ENCODE measurements at regions of chr12 and their contacts with region 1.

Region 1: DNA sequence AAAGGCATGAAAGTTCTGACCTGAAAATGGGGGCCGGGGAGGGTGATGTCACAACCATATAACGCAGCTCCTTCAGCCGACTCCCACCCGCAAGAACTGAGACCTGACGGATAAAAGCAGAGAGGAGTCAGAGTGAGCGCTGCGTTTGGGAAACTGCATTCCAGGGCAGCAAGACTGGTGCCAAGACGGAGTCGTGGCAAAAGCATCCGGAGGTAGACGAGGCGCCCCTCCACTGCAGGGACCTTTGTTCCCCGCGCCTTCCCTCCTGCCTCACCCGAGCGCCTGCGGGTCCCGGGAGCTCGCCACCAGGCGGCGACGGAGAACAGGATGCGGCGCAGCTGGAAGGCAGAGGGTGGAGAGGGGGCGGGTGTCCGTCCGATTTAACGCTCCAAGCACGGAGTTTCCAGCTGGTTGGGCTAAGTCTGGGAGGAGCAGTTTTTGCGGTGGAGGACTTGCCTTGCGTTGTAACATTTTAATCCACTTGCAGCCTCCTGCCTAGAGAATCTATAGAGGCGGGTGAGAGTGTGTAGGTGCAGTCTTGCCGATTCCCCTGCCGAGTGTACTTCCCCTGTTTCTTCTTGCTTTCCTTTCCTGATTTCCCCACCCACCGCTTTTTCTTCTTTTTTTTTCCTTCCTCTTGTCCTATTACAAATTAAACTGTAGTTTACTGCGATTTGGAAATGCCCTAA is 1.2 kb upstream of the CPNE8 start:
- DNase-seq: peak; percentile 65 to 93
- H3K4me3 ChIP-seq: peak overlapping the region; percentile 63 to 75 (median 72)
- H3K27ac ChIP-seq: no peak overlapping the region
- H3K4me1 ChIP-seq: peaks cover 0 to 2% (median 0%) of the 10 kb centered on the region in 4 experiments; a peak in 1 of 7 replicates
- H3K27me3 ChIP-seq: peaks cover 0 to 10% (median 4%) of the 10 kb centered on the region in 4 experiments; a peak in 4 of 7 replicates
- CTCF ChIP-seq: peak; percentile 85 to 89 (median 86)
- EP300 ChIP-seq: peak in 1 of 2 experiments; percentile 82; a peak in 1 of 3 replicates
- POLR2A ChIP-seq: no peak; a peak in 1 of 3 replicates
- RAD21 ChIP-seq: peak; percentile 70 to 84

Region 2: GRCh38 chr12:38895446-38895845 is 11.2 kb before region 1 on chr12:
- CTCF ChIA-PET with region 1: interaction called, 16 read pairs
- POLR2A ChIA-PET with region 1: interaction called, 9 read pairs
- DNase-seq: no peak
- H3K4me3 ChIP-seq: no peak overlapping the region
- H3K27ac ChIP-seq: no peak overlapping the region
- H3K4me1 ChIP-seq: peaks cover 0 to 5% (median 0%) of the 10 kb centered on the region in 4 experiments; a peak in 1 of 7 replicates
- H3K27me3 ChIP-seq: no peaks in the 10 kb centered on the region
- CTCF ChIP-seq: no peak
- EP300 ChIP-seq: no peak
- POLR2A ChIP-seq: no peak
- RAD21 ChIP-seq: no peak

Measured in H1 (cell line).